ENCODE measurements at regions of chr6 and their contacts with region 1.

Region 1: GRCh38 chr6:2988426-2989331 is 11.0 kb upstream of the NQO2 start:
- DNase-seq: peak; percentile 59 to 90 (median 74)
- ATAC-seq: peak; percentile 63
- H3K4me3 ChIP-seq: peak overlapping the region; percentile 98
- H3K4me3 Mint-ChIP-seq: peak overlapping the region; percentile 97
- H3K27ac ChIP-seq: peak overlapping the region; percentile 92 to 96
- H3K27ac Mint-ChIP-seq: peak overlapping the region; percentile 100
- H3K4me1 ChIP-seq: peaks cover 32% of the 10 kb centered on the region
- H3K4me1 Mint-ChIP-seq: peaks cover 28% of the 10 kb centered on the region
- H3K27me3 ChIP-seq: no peaks in the 10 kb centered on the region
- H3K27me3 Mint-ChIP-seq: no peaks in the 10 kb centered on the region
- CTCF ChIP-seq: peak; percentile 72

Region 2: DNA sequence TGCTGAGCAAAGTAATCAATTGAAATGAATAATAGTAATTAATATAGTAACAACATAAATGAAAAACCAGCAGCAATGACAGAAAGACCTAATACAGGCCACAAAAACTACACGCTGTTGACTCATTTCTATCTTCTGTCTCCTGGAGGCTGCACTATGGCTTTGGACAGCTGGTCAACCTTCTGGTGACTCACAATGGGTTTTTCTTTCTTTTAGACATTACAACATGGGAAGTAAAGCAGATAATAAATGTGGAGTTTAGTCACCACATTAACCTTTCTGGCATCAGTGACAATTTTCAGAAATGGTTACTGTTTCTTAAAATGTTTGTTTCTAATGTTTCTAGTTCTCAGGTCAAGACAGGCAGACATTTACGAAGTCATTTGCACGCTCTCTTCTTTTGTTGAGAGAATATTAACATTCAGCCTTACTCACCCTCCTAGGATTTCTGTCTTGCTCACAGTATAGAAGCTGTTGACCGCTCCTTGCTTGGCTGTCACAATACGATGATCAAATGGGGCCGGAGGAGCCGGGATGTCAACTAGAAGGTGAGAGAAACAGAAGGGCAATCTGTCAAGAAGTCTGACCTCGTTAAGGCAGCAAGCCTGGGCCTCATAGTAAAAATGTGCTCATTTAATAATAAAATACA is 300.1 kb before region 1 on chr6:
- CTCF ChIA-PET with region 1: no interaction called
- POLR2A ChIA-PET with region 1: no interaction called
- intact Hi-C with region 1: no loop called
- DNase-seq: peak in 2 of 14 experiments; percentile 30 to 37
- ATAC-seq: no peak
- H3K4me3 ChIP-seq: no peak overlapping the region
- H3K4me3 Mint-ChIP-seq: no peak overlapping the region
- H3K27ac ChIP-seq: no peak overlapping the region
- H3K27ac Mint-ChIP-seq: no peak overlapping the region
- H3K4me1 ChIP-seq: no peaks in the 10 kb centered on the region
- H3K4me1 Mint-ChIP-seq: no peaks in the 10 kb centered on the region
- H3K27me3 ChIP-seq: no peaks in the 10 kb centered on the region
- H3K27me3 Mint-ChIP-seq: no peaks in the 10 kb centered on the region
- CTCF ChIP-seq: no peak

Region 3: GRCh38 chr6:2765166-2765895 is 223.3 kb before region 1 on chr6 and contains the start of gene WRNIP1:
- CTCF ChIA-PET with region 1: interaction called, 3 read pairs
- POLR2A ChIA-PET with region 1: interaction called, 25 read pairs
- intact Hi-C with region 1: loop called in 1 of 2 experiments (anchors 2 kb)
- DNase-seq: peak; percentile 92 to 99 (median 96)
- ATAC-seq: peak; percentile 83
- H3K4me3 ChIP-seq: peak within 1 kb of the TSS; percentile 78
- H3K4me3 Mint-ChIP-seq: peak within 1 kb of the TSS; percentile 97
- H3K27ac ChIP-seq: peak within 1 kb of the TSS; percentile 80 to 96
- H3K27ac Mint-ChIP-seq: peak within 1 kb of the TSS; percentile 97
- H3K4me1 ChIP-seq: peaks cover 34% of the 10 kb centered on the region
- H3K4me1 Mint-ChIP-seq: peaks cover 61% of the 10 kb centered on the region
- H3K27me3 ChIP-seq: no peaks in the 10 kb centered on the region
- H3K27me3 Mint-ChIP-seq: no peaks in the 10 kb centered on the region
- CTCF ChIP-seq: peak; percentile 44
- total RNA-seq, gene WRNIP1: 22.4 to 25.2 TPM

Region 4: GRCh38 chr6:2848851-2849250 is 139.8 kb before region 1 on chr6:
- CTCF ChIA-PET with region 1: interaction called, 9 read pairs
- POLR2A ChIA-PET with region 1: interaction called, 33 read pairs
- intact Hi-C with region 1: loop called (anchors 2 to 5 kb)
- DNase-seq: peak; percentile 48 to 92 (median 72)
- ATAC-seq: peak; percentile 96
- H3K4me3 ChIP-seq: no peak overlapping the region
- H3K4me3 Mint-ChIP-seq: peak overlapping the region; percentile 72
- H3K27ac ChIP-seq: peak overlapping the region in 1 of 2 donors; percentile 27
- H3K27ac Mint-ChIP-seq: peak overlapping the region; percentile 90
- H3K4me1 ChIP-seq: peaks cover 41% of the 10 kb centered on the region
- H3K4me1 Mint-ChIP-seq: peaks cover 49% of the 10 kb centered on the region
- H3K27me3 ChIP-seq: no peaks in the 10 kb centered on the region
- H3K27me3 Mint-ChIP-seq: no peaks in the 10 kb centered on the region
- CTCF ChIP-seq: no peak

Region 5: GRCh38 chr6:2911171-2911570 is 77.5 kb before region 1 on chr6:
- CTCF ChIA-PET with region 1: interaction called, 11 read pairs
- POLR2A ChIA-PET with region 1: interaction called, 7 read pairs
- intact Hi-C with region 1: no loop called
- DNase-seq: no peak
- ATAC-seq: no peak
- H3K4me3 ChIP-seq: no peak overlapping the region
- H3K4me3 Mint-ChIP-seq: no peak overlapping the region
- H3K27ac ChIP-seq: no peak overlapping the region
- H3K27ac Mint-ChIP-seq: no peak overlapping the region
- H3K4me1 ChIP-seq: peaks cover 15% of the 10 kb centered on the region
- H3K4me1 Mint-ChIP-seq: peaks cover 25% of the 10 kb centered on the region
- H3K27me3 ChIP-seq: no peaks in the 10 kb centered on the region
- H3K27me3 Mint-ChIP-seq: no peaks in the 10 kb centered on the region
- CTCF ChIP-seq: no peak

Region 6: GRCh38 chr6:2971420-2972218 is 17.1 kb before region 1 on chr6 and contains the start of gene SERPINB6:
- CTCF ChIA-PET with region 1: interaction called, 6 read pairs
- POLR2A ChIA-PET with region 1: interaction called, 30 read pairs
- intact Hi-C with region 1: loop called (anchors 1 to 2 kb)
- DNase-seq: peak in 11 of 14 experiments; percentile 11 to 72 (median 31)
- ATAC-seq: peak; percentile 65
- H3K4me3 ChIP-seq: peak within 1 kb of the TSS; percentile 56
- H3K4me3 Mint-ChIP-seq: peak within 1 kb of the TSS; percentile 93
- H3K27ac ChIP-seq: peak within 1 kb of the TSS in 1 of 2 donors; percentile 14
- H3K27ac Mint-ChIP-seq: peak within 1 kb of the TSS; percentile 84
- H3K4me1 ChIP-seq: peaks cover 17% of the 10 kb centered on the region
- H3K4me1 Mint-ChIP-seq: peaks cover 31% of the 10 kb centered on the region
- H3K27me3 ChIP-seq: peaks cover 0 to 4% of the 10 kb centered on the region in 2 experiments
- H3K27me3 Mint-ChIP-seq: peaks cover 26% of the 10 kb centered on the region
- CTCF ChIP-seq: no peak
- total RNA-seq, gene SERPINB6: 11.0 to 11.9 TPM

Region 7: GRCh38 chr6:3052481-3053230 is 64.0 kb after region 1 on chr6:
- CTCF ChIA-PET with region 1: no interaction called
- POLR2A ChIA-PET with region 1: interaction called, 31 read pairs
- intact Hi-C with region 1: no loop called
- DNase-seq: no peak
- ATAC-seq: no peak
- H3K4me3 ChIP-seq: peak overlapping the region; percentile 64
- H3K4me3 Mint-ChIP-seq: peak overlapping the region; percentile 79
- H3K27ac ChIP-seq: no peak overlapping the region
- H3K27ac Mint-ChIP-seq: peak overlapping the region; percentile 58
- H3K4me1 ChIP-seq: peaks cover 21% of the 10 kb centered on the region
- H3K4me1 Mint-ChIP-seq: peaks cover 23% of the 10 kb centered on the region
- H3K27me3 ChIP-seq: no peaks in the 10 kb centered on the region
- H3K27me3 Mint-ChIP-seq: no peaks in the 10 kb centered on the region
- CTCF ChIP-seq: no peak

Region 8: GRCh38 chr6:3157131-3157927 is 168.7 kb after region 1 on chr6 and contains the start of gene TUBB2A:
- CTCF ChIA-PET with region 1: no interaction called
- POLR2A ChIA-PET with region 1: interaction called, 10 read pairs
- intact Hi-C with region 1: loop called in 1 of 2 experiments (anchors 5 kb)
- DNase-seq: peak; percentile 79 to 94 (median 87)
- ATAC-seq: peak; percentile 62
- H3K4me3 ChIP-seq: peak within 1 kb of the TSS; percentile 75
- H3K4me3 Mint-ChIP-seq: peak within 1 kb of the TSS; percentile 91
- H3K27ac ChIP-seq: peak within 1 kb of the TSS; percentile 52 to 59
- H3K27ac Mint-ChIP-seq: peak within 1 kb of the TSS; percentile 87
- H3K4me1 ChIP-seq: peaks cover 46% of the 10 kb centered on the region
- H3K4me1 Mint-ChIP-seq: peaks cover 41% of the 10 kb centered on the region
- H3K27me3 ChIP-seq: no peaks in the 10 kb centered on the region
- H3K27me3 Mint-ChIP-seq: peaks cover 4% of the 10 kb centered on the region
- CTCF ChIP-seq: peak; percentile 42
- total RNA-seq, gene TUBB2A: 54.3 to 58.5 TPM

Region 9: DNA sequence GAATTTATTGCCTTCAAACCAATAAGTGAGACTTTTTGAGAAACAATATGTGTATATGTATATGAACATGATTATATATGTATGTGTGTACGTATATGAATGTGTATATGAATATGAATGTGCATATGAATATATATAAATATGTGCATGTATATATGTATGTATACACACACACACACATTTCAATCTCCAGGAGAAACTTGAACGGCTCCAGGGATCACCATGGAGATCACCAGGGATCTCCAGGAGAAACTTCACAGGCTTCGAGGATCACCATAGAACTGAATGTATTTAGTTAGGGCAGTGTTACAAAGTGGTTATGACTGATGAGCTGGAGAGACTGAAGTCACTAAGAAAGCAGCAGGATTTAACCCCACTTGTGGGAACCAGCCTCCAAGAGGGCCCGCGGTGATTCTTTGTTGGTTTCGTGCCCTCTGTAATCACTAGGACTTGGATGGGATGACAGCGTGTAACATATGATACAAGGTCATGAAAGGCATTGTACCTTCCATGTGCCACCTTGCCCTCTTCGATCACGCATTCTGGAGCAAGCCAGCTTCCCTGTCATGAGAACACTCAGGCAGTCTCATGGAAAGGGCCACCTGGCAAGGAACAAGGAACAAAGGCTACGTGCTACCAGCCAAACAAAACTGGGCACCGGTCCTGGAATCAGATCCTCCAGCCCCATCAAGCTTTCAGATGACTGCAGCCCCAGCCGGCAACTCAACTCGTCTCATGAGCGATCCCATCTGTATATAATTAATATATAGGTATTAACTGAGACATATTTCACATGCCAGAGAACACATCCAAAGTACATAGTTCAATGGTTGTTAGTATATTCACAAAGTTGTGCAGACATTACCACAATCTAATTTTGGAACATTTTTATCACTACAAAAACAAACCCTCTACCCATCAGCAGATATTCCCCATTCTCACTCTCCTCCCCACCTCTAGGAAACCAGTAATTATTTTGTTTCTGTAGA is 869.1 kb after region 1 on chr6:
- CTCF ChIA-PET with region 1: no interaction called
- POLR2A ChIA-PET with region 1: no interaction called
- intact Hi-C with region 1: no loop called
- DNase-seq: no peak
- ATAC-seq: no peak
- H3K4me3 ChIP-seq: no peak overlapping the region
- H3K4me3 Mint-ChIP-seq: no peak overlapping the region
- H3K27ac ChIP-seq: no peak overlapping the region
- H3K27ac Mint-ChIP-seq: no peak overlapping the region
- H3K4me1 ChIP-seq: no peaks in the 10 kb centered on the region
- H3K4me1 Mint-ChIP-seq: no peaks in the 10 kb centered on the region
- H3K27me3 ChIP-seq: peaks cover 4 to 10% of the 10 kb centered on the region in 2 experiments
- H3K27me3 Mint-ChIP-seq: peaks cover 27% of the 10 kb centered on the region
- CTCF ChIP-seq: no peak

Region 10: GRCh38 chr6:4751823-4752467 is 1763.3 kb after region 1 on chr6:
- CTCF ChIA-PET with region 1: no interaction called
- POLR2A ChIA-PET with region 1: no interaction called
- intact Hi-C with region 1: no loop called
- DNase-seq: no peak
- ATAC-seq: no peak
- H3K4me3 ChIP-seq: no peak overlapping the region
- H3K4me3 Mint-ChIP-seq: no peak overlapping the region
- H3K27ac ChIP-seq: no peak overlapping the region
- H3K27ac Mint-ChIP-seq: no peak overlapping the region
- H3K4me1 ChIP-seq: no peaks in the 10 kb centered on the region
- H3K4me1 Mint-ChIP-seq: no peaks in the 10 kb centered on the region
- H3K27me3 ChIP-seq: peaks cover 4% of the 10 kb centered on the region in 2 experiments
- H3K27me3 Mint-ChIP-seq: peaks cover 13% of the 10 kb centered on the region
- CTCF ChIP-seq: no peak

Measured in CD4-positive, alpha-beta T cell (primary cell).